ENCODE measurements at regions of chr17 and their contacts with region 1.

Region 1: DNA sequence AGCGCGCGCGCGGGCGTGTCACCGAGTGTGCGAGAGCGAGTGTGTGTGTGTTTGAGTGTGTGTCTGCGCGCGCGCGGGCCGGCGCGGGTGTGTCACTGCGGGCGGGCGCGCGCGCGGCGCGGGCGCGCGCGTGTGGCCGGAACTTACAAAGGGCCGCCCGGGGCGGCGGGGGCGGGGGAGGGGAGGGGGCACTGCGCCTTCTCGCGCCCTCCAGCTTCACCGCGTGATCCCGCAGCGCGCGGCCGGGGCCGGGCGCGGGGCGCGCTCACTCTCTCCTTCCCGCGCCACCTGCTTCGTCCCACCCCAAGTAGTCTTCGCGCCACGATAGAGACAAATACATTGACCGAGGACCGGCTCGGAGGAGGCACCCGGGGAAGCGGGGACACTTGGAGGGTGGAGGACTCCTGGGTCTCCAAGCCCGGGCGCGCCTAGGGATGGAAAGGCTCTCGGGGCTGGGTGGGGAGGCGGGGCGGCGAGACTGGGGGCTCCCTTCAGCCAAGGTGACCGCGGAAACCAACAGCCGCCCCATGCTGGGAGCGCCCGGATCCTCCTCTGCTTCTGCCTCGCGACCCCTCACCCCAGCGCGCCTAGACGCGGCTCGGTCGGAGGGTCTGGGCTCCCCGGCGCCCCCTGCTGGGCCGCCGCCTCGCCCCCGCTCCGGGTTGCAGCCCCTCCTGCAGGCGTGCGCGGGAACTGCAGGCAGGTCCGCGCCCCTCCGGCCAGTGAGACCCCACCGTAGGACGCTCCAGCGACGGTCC is at the start of gene SRCIN1:
- DNase-seq: peak; percentile 49 to 56
- H3K4me3 ChIP-seq: peak within 1 kb of the TSS in 1 of 3 donors; percentile 45
- H3K27ac ChIP-seq: no peak within 1 kb of the TSS
- H3K4me1 ChIP-seq: peaks cover 7 to 21% of the 10 kb centered on the region in 2 donors
- H3K27me3 ChIP-seq: no peaks in the 10 kb centered on the region
- CTCF ChIP-seq: peak in 4 of 6 experiments; percentile 31 to 54 (median 48)
- POLR2A ChIP-seq: no peak
- total RNA-seq, gene SRCIN1: 0.54 to 0.89 (median 0.69) TPM

Region 2: GRCh38 chr17:38557836-38558727 is 48.0 kb before region 1 on chr17:
- intact Hi-C with region 1: loop called (anchors 5 kb)
- DNase-seq: peak; percentile 94
- H3K4me3 ChIP-seq: peak overlapping the region; percentile 2 to 27 (median 15)
- H3K27ac ChIP-seq: no peak overlapping the region
- H3K4me1 ChIP-seq: peaks cover 17 to 31% of the 10 kb centered on the region in 2 donors
- H3K27me3 ChIP-seq: peaks cover 4% of the 10 kb centered on the region
- CTCF ChIP-seq: peak; percentile 62 to 99 (median 88)
- POLR2A ChIP-seq: peak in 1 of 2 donors; percentile 28

Region 3: DNA sequence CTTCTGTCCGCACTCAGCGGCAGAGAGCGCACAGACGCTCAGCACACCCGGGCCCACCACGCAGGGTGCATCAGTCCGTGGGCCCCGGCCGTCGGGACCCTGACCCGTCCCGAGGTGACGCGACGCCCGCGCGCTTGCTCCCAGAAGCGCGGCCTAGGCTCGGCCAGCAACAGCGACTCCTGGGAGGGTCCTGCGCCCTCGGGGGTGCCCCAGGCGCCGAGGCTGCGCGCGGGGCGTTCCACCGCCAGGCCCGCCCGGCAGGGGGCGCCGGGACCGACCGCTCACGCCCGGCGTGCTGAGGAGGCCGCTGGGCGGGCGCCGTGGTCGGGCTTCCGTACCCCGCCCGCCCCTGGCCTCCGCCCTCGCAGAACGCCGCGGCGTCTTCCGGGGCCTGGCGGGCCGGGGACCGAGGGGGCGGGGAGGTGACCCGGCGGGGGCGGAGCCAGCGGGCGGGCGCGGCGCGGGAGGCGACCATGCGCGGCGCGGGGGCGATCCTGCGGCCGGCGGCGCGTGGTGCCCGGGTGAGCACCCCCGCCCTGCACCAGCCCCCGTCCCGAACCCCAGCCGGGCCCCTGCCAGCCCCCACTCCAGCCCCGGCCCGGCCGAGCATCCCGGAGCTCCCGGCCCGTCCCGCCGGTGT is 123.9 kb after region 1 on chr17 and contains the start of gene CISD3:
- intact Hi-C with region 1: loop called (anchors 10 kb)
- DNase-seq: peak; percentile 89 to 90
- H3K4me3 ChIP-seq: peak within 1 kb of the TSS; percentile 41 to 76 (median 42)
- H3K27ac ChIP-seq: peak within 1 kb of the TSS; percentile 89 to 92 (median 92)
- H3K4me1 ChIP-seq: peaks cover 30 to 36% of the 10 kb centered on the region in 2 donors
- H3K27me3 ChIP-seq: no peaks in the 10 kb centered on the region
- CTCF ChIP-seq: peak in 5 of 6 experiments; percentile 30 to 96 (median 94)
- POLR2A ChIP-seq: peak in 1 of 2 donors; percentile 48
- total RNA-seq, gene CISD3: 12.4 to 29.0 (median 18.2) TPM